ENCODE measurements at regions of chr21 and their contacts with region 1.

Region 1: DNA sequence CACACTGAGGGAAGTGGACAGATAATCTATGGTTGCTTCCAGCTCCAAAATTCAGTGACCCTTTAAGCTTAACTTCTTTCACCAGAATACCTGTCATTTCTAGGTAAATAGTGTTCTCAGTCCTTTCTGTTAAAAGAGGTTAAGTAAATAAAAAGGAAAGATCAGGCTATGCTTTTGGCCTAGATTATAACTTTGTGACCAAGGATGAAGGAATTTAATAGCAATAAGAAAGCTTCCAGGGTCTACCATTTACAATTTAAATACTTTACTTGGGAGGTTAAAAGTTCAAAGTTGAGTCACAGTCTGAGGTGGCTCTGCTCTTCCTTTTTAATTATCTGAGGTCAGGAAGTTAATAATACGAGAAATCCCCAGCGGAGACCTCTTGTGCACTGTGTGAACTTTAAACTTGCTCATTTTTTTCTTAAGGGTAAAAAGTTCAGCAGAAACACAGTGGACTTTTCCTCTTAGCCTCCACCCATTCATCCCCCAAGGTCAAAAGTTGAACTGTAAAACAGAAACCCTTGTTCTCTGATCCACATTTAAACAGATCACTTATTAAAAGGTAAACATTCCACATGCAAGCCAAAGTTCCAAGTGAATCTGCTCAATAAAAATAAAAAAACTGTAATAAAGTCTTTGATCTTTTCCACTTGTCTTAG is 187.1 kb downstream of the NRIP1 start:
- DNase-seq: no peak
- ATAC-seq: peak; percentile 61
- H3K4me3 ChIP-seq: 0 out of 2 replicates have a peak overlapping the region, but pooled peaks have one; percentile 31
- H3K27ac ChIP-seq: no peak overlapping the region
- H3K4me1 ChIP-seq: peaks cover 32% of the 10 kb centered on the region
- H3K27me3 ChIP-seq: no peaks in the 10 kb centered on the region
- CTCF ChIP-seq: no peak
- EP300 ChIP-seq: peak; percentile 67 to 80; a peak in 2 of 4 replicates
- POLR2A ChIP-seq: no peak
- RAD21 ChIP-seq: 0 out of 2 replicates have a peak, but pooled peaks have one; percentile 5

Region 2: GRCh38 chr21:14223365-14223764 is 654.3 kb before region 1 on chr21:
- CTCF ChIA-PET with region 1: no interaction called
- POLR2A ChIA-PET with region 1: no interaction called
- RAD21 ChIA-PET with region 1: no interaction called
- SMC1A ChIA-PET with region 1: no interaction called
- in situ Hi-C with region 1: no loop called
- intact Hi-C with region 1: no loop called
- DNase-seq: no peak
- ATAC-seq: no peak
- H3K4me3 ChIP-seq: no peak overlapping the region
- H3K27ac ChIP-seq: no peak overlapping the region
- H3K4me1 ChIP-seq: no peaks in the 10 kb centered on the region
- H3K27me3 ChIP-seq: no peaks in the 10 kb centered on the region
- CTCF ChIP-seq: no peak
- EP300 ChIP-seq: no peak
- POLR2A ChIP-seq: no peak
- RAD21 ChIP-seq: no peak

Region 3: GRCh38 chr21:14545906-14546480 is 331.7 kb before region 1 on chr21 and contains the start of gene SAMSN1:
- CTCF ChIA-PET with region 1: no interaction called
- POLR2A ChIA-PET with region 1: no interaction called
- RAD21 ChIA-PET with region 1: no interaction called
- SMC1A ChIA-PET with region 1: interaction called, 3 read pairs
- in situ Hi-C with region 1: no loop called
- intact Hi-C with region 1: loop called (anchors 10 kb)
- DNase-seq: peak; percentile 78
- ATAC-seq: peak; percentile 86
- H3K4me3 ChIP-seq: peak within 1 kb of the TSS; percentile 76
- H3K27ac ChIP-seq: peak within 1 kb of the TSS; percentile 87
- H3K4me1 ChIP-seq: peaks cover 12% of the 10 kb centered on the region; the same call in 1 of the 2 replicates
- H3K27me3 ChIP-seq: no peaks in the 10 kb centered on the region
- CTCF ChIP-seq: no peak
- EP300 ChIP-seq: peak in 1 of 2 experiments; percentile 66; a peak in 1 of 4 replicates
- POLR2A ChIP-seq: peak; percentile 83
- RAD21 ChIP-seq: 0 out of 2 replicates have a peak, but pooled peaks have one; percentile 22
- polyA plus RNA-seq, gene SAMSN1: 90.4 to 102 TPM

Region 4: DNA sequence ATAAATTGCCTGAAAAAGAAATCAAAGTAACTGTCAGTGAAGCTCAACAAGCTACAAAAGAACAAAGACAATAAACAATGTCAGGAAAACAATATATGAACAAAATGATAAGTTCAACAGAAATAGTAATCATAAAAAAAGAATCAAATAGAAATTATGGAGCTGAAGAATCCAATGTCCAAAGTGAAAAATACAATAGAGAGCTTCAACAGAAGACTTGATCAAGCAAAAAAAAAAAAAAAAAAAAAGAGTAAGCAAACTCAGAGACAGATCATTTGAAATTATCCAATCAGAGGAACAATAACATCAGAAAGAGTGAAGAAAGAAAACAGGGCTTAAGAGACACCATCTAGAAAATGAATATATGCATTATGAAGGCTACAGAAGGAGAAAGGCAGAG is 80.2 kb before region 1 on chr21:
- CTCF ChIA-PET with region 1: no interaction called
- POLR2A ChIA-PET with region 1: no interaction called
- RAD21 ChIA-PET with region 1: no interaction called
- SMC1A ChIA-PET with region 1: no interaction called
- in situ Hi-C with region 1: no loop called
- intact Hi-C with region 1: no loop called
- DNase-seq: no peak
- ATAC-seq: no peak
- H3K4me3 ChIP-seq: no peak overlapping the region
- H3K27ac ChIP-seq: no peak overlapping the region
- H3K4me1 ChIP-seq: no peaks in the 10 kb centered on the region
- H3K27me3 ChIP-seq: no peaks in the 10 kb centered on the region
- CTCF ChIP-seq: no peak
- EP300 ChIP-seq: no peak
- POLR2A ChIP-seq: no peak
- RAD21 ChIP-seq: no peak

Region 5: GRCh38 chr21:14889080-14889810 is 11.5 kb after region 1 on chr21:
- CTCF ChIA-PET with region 1: interaction called, 7 read pairs
- POLR2A ChIA-PET with region 1: no interaction called
- RAD21 ChIA-PET with region 1: interaction called, 3 read pairs
- SMC1A ChIA-PET with region 1: interaction called, 20 read pairs
- in situ Hi-C with region 1: no loop called
- intact Hi-C with region 1: no loop called
- DNase-seq: no peak
- ATAC-seq: no peak
- H3K4me3 ChIP-seq: no peak overlapping the region
- H3K27ac ChIP-seq: no peak overlapping the region
- H3K4me1 ChIP-seq: no peaks in the 10 kb centered on the region
- H3K27me3 ChIP-seq: no peaks in the 10 kb centered on the region
- CTCF ChIP-seq: no peak
- EP300 ChIP-seq: no peak
- POLR2A ChIP-seq: no peak
- RAD21 ChIP-seq: no peak

Region 6: DNA sequence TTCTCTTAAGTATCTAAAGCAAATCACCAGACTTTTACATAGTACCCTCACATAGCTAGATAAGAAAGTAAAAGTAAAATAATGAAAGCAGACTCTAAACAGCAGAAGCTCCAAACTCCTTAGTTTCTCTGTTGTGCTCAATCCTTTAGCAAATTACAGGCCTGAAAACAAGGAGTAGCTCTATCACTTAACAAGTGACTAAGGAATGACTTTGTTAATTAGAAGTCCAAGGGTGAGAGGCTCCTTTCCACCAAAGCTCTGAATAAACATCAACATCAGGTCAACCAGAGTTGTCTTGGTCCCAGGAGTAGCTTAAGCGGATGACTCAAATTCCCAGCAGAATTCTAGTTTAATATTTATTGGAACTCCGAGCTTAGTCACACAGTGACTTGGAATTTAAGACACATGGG is 181.2 kb after region 1 on chr21:
- CTCF ChIA-PET with region 1: interaction called, 4 read pairs
- POLR2A ChIA-PET with region 1: no interaction called
- RAD21 ChIA-PET with region 1: interaction called, 10 read pairs
- SMC1A ChIA-PET with region 1: interaction called, 4 read pairs
- in situ Hi-C with region 1: no loop called
- intact Hi-C with region 1: no loop called
- DNase-seq: no peak
- ATAC-seq: peak; percentile 51
- H3K4me3 ChIP-seq: peak overlapping the region; percentile 52
- H3K27ac ChIP-seq: peak overlapping the region; percentile 80
- H3K4me1 ChIP-seq: peaks cover 4% of the 10 kb centered on the region
- H3K27me3 ChIP-seq: no peaks in the 10 kb centered on the region
- CTCF ChIP-seq: no peak
- EP300 ChIP-seq: no peak
- POLR2A ChIP-seq: no peak
- RAD21 ChIP-seq: no peak

Region 7: DNA sequence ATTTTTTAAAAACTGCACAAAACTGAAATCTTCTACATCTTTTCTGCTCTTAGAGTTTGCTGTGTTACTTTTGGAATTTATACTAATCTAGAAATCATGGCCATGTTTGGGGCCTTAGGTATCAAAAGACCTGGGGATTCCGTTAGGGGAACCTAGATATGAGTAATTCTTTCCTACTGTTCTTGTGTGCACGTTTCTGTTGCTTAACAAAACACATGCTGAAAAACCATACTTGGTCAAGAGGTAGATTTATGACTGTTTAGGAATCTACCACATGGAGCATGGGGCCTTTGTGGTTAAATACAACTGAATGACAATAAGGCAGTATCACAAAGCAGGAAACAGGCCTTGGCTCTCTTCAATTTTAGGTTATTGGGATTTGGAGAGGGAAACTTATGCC is 560.2 kb after region 1 on chr21:
- CTCF ChIA-PET with region 1: no interaction called
- POLR2A ChIA-PET with region 1: no interaction called
- RAD21 ChIA-PET with region 1: interaction called, 4 read pairs
- SMC1A ChIA-PET with region 1: no interaction called
- in situ Hi-C with region 1: no loop called
- intact Hi-C with region 1: loop called (anchors 5 kb)
- DNase-seq: peak; percentile 46
- ATAC-seq: peak; percentile 89
- H3K4me3 ChIP-seq: no peak overlapping the region
- H3K27ac ChIP-seq: no peak overlapping the region
- H3K4me1 ChIP-seq: no peaks in the 10 kb centered on the region
- H3K27me3 ChIP-seq: no peaks in the 10 kb centered on the region
- CTCF ChIP-seq: no peak
- EP300 ChIP-seq: peak; percentile 67 to 72; a peak in 3 of 4 replicates
- POLR2A ChIP-seq: no peak
- RAD21 ChIP-seq: no peak